Psoas muscle (tissue), 8 donors: ENCODE measurements at regions of chr6 and their contacts with region 1.

Region 1: DNA sequence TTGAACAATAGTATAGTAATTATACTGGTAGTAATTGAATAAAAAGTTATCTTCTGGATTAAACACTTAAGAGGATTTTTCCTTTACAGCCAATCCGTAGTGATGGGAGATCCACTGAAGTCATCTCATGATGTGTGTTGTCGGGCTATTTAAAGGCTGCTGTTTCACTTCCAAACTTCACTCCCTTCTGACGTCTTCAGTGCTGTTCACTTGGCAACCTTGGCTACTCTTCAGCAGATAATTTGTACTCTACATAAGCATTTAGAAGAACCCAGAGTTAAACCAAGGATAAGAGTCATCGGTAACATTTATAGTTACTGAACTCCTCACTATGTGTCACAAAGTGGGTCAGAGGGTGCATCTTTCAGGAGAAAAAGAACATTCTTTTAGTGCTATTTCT is 179.1 kb upstream of the EYA4 start:
- DNase-seq: no peak
- ATAC-seq: peak; percentile 93 to 98 (median 97)
- H3K4me3 ChIP-seq: peak overlapping the region; percentile 24
- H3K27ac ChIP-seq: peak overlapping the region; percentile 84
- H3K4me1 ChIP-seq: peaks cover 14% of the 10 kb centered on the region
- H3K27me3 ChIP-seq: no peaks in the 10 kb centered on the region
- CTCF ChIP-seq: no peak

Region 2: DNA sequence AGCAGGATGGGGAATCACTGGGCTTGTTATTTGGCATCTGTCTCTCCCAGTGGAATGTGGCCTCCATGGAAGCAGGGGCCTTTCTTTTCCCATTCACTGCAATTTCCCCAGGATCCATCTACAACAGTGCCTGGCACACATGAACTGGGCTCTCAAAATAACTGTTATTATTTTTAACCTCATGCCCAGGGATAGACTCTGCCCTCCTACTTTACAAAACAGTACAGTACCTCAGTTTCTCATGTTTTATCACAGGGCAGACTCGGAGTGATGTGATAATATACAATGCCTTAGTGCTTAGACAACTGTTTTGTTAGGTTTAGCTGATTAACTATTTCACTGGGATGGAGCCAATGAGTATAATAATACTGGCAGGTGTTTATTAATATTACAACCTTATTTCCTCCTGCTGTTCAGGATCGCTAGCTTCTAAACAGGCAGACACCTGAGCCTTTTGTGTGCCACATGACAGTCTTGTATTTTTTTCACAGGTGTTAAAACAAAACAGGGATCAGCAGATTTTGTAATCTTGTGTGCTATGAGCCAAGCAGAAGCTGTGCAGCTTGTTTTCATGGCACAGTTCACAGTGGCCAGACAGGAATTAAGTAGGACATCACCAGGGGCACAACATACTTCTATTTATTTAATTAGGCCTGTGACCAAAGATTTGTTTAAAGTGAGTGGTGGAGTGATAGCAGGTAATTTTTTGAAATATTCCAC is 21.3 kb after region 1 on chr6:
- intact Hi-C with region 1: no loop called
- DNase-seq: no peak
- ATAC-seq: peak; percentile 73 to 94 (median 82)
- H3K4me3 ChIP-seq: no peak overlapping the region
- H3K27ac ChIP-seq: peak overlapping the region; percentile 60
- H3K4me1 ChIP-seq: peaks cover 20% of the 10 kb centered on the region
- H3K27me3 ChIP-seq: no peaks in the 10 kb centered on the region
- CTCF ChIP-seq: no peak

Region 3: GRCh38 chr6:133241086-133241900 is 179.2 kb after region 1 on chr6 and contains the start of gene EYA4:
- intact Hi-C with region 1: loop called in 1 of 2 experiments (anchors 5 kb)
- DNase-seq: peak; percentile 60 to 85
- ATAC-seq: peak; percentile 65 to 80 (median 70)
- H3K4me3 ChIP-seq: peak within 1 kb of the TSS; percentile 93
- H3K27ac ChIP-seq: peak within 1 kb of the TSS; percentile 99
- H3K4me1 ChIP-seq: peaks cover 24% of the 10 kb centered on the region
- H3K27me3 ChIP-seq: no peaks in the 10 kb centered on the region
- CTCF ChIP-seq: no peak
- total RNA-seq, gene EYA4: 32.8 to 48.3 (median 37.4) TPM